SK-N-SH (cell line): ENCODE measurements at regions of chr11 and their contacts with region 1.

Region 1: DNA sequence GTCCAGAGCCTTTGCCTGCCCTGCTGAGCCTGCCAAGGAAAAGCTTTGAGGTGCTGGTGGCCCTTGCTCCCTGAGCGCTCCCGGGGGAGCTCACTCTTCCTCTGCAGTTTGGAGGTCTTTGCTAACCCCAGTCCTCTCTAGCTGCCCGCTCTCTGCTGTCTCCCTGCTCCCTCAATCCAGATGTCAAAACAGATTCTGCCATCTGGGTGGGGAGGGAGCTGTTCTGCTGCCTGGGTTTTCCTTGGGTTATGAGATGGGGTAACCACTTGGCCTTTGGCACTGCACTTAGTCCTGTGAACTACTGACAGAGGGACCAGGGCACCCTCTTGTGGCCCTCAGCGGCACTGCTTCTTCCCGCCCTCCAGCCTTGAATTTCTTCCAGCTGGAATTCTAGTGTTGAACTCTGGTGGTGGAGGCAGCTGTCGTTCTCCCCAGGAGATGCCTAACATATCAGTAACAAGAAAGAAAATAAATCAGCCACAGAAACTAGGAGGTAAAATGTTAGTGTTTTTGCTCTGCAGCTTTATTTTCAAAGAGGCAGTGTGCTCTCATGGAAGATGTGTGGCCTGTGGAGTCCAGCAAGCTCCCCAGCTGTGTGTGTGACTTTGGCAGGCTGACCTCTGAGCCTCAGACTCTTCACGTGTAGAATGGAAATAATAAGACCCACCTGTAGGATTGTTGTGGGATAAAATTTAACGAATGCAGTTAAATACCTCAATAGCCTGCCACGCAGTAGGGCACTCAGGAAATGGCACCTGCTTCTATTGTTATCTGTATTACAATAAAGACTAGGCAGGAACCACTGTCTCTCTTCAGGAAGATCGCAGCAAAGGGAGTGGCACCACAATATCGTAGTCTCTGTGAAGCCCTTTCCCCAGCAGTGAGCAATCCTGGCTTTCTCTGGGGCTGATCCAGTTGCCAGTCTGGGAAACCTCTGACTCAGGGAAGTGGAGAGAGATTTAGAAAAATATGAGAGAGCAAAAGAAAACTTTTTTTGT is 23.4 kb downstream of the ARFGAP2 start:
- DNase-seq: peak; percentile 89
- H3K4me3 ChIP-seq: peak overlapping the region in 1 of 2 experiments; percentile 39; a peak in 1 of 4 replicates
- H3K27ac ChIP-seq: peak overlapping the region; percentile 49 to 66
- H3K4me1 ChIP-seq: peaks cover 20 to 22% of the 10 kb centered on the region in 2 experiments; a peak in 2 of 4 replicates
- H3K27me3 ChIP-seq: no peaks in the 10 kb centered on the region
- CTCF ChIP-seq: peak; percentile 98
- EP300 ChIP-seq: no peak
- RAD21 ChIP-seq: peak; percentile 99

Region 2: GRCh38 chr11:46845740-46846509 is 307.3 kb before region 1 on chr11 and contains the start of gene CKAP5:
- CTCF ChIA-PET with region 1: interaction called, 10 read pairs
- POLR2A ChIA-PET with region 1: no interaction called
- DNase-seq: peak; percentile 97
- H3K4me3 ChIP-seq: peak within 1 kb of the TSS; percentile 72 to 92
- H3K27ac ChIP-seq: peak within 1 kb of the TSS; percentile 46 to 71
- H3K4me1 ChIP-seq: peaks cover 0 to 7% of the 10 kb centered on the region in 2 experiments; a peak in 2 of 4 replicates
- H3K27me3 ChIP-seq: no peaks in the 10 kb centered on the region
- CTCF ChIP-seq: no peak
- EP300 ChIP-seq: no peak
- RAD21 ChIP-seq: no peak
- polyA plus RNA-seq, gene CKAP5: 51.7 and 63.7 TPM in 2 replicates

Region 3: GRCh38 chr11:46889689-46890475 is 263.4 kb before region 1 on chr11:
- CTCF ChIA-PET with region 1: interaction called, 101 read pairs
- POLR2A ChIA-PET with region 1: interaction called, 4 read pairs
- DNase-seq: peak; percentile 80
- H3K4me3 ChIP-seq: no peak overlapping the region; a peak in 1 of 4 replicates
- H3K27ac ChIP-seq: no peak overlapping the region
- H3K4me1 ChIP-seq: no peaks in the 10 kb centered on the region
- H3K27me3 ChIP-seq: no peaks in the 10 kb centered on the region
- CTCF ChIP-seq: peak; percentile 86
- EP300 ChIP-seq: no peak
- RAD21 ChIP-seq: peak; percentile 99

Region 4: GRCh38 chr11:46930089-46930488 is 223.2 kb before region 1 on chr11:
- CTCF ChIA-PET with region 1: interaction called, 17 read pairs
- POLR2A ChIA-PET with region 1: no interaction called
- DNase-seq: no peak
- H3K4me3 ChIP-seq: no peak overlapping the region
- H3K27ac ChIP-seq: peak overlapping the region in 1 of 2 experiments; percentile 66; a peak in 2 of 4 replicates
- H3K4me1 ChIP-seq: no peaks in the 10 kb centered on the region
- H3K27me3 ChIP-seq: no peaks in the 10 kb centered on the region
- CTCF ChIP-seq: no peak
- EP300 ChIP-seq: no peak
- RAD21 ChIP-seq: no peak

Region 5: GRCh38 chr11:46951864-46952263 is 201.4 kb before region 1 on chr11:
- CTCF ChIA-PET with region 1: interaction called, 10 read pairs
- POLR2A ChIA-PET with region 1: no interaction called
- DNase-seq: no peak
- H3K4me3 ChIP-seq: no peak overlapping the region
- H3K27ac ChIP-seq: no peak overlapping the region
- H3K4me1 ChIP-seq: peaks cover 11 to 28% of the 10 kb centered on the region in 2 experiments
- H3K27me3 ChIP-seq: no peaks in the 10 kb centered on the region
- CTCF ChIP-seq: no peak
- EP300 ChIP-seq: no peak
- RAD21 ChIP-seq: no peak

Region 6: DNA sequence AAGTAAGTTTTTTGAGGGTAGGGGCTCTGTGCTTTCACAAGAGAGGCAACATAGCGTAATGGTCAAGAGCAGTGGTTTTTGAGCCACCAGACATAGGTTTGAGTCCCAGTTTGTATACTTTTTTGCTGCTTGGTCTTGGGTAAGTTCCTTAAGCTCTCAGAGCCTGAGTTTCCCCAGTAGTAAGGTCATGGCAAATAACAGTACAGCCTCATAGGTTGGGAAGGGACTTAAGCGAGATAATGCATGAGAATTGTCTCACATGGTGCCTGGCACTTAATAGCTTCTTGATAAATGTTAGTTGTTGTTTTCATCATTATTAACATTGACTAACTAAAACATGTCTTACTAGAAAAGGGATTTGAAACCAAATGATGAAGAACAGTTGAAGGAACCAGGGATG is 59.7 kb before region 1 on chr11:
- CTCF ChIA-PET with region 1: interaction called, 11 read pairs
- POLR2A ChIA-PET with region 1: no interaction called
- DNase-seq: no peak
- H3K4me3 ChIP-seq: no peak overlapping the region
- H3K27ac ChIP-seq: no peak overlapping the region
- H3K4me1 ChIP-seq: peaks cover 0 to 3% of the 10 kb centered on the region in 2 experiments; a peak in 2 of 4 replicates
- H3K27me3 ChIP-seq: no peaks in the 10 kb centered on the region
- CTCF ChIP-seq: no peak
- EP300 ChIP-seq: no peak
- RAD21 ChIP-seq: no peak